ENCODE measurements at regions of chr5 and their contacts with region 1.

Region 1: DNA sequence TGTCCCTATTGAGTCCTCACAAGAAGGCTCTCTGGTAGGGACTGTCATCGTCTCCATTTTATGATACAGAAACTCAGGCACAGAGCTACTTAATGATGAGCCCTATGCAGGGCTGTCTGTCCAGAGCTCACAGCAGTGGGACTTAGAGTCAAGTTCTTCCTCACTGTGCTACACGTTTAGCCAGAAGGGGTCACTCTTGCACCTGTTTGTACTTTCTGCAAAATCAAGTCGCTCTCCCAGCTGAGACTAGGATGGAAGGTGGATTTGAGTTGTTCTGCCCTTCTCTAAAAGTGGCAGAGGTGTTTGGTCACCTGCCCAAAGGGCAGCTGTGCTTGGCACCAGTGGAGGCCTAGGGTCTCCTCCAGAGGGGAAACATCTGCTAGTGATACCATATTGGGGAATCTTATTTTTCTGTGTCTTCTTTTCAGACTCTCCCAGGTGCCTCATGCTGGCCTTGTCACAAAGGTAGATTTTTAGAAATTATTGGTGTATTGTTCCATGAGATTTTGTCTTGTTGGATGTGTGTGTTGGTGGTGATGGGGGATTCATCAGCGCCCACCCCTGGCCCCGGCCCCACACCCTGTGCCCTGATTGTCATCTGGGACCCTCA is 104.2 kb downstream of the PPARGC1B start:
- DNase-seq: peak; percentile 41
- H3K4me3 ChIP-seq: no peak overlapping the region
- H3K27me3 ChIP-seq: peaks cover 1% of the 10 kb centered on the region; the same call in 1 of the 2 replicates
- CTCF ChIP-seq: peak; percentile 83

Region 2: GRCh38 chr5:149654231-149654630 is 180.1 kb before region 1 on chr5:
- CTCF ChIA-PET with region 1: interaction called, 3 read pairs
- POLR2A ChIA-PET with region 1: interaction called, 10 read pairs
- DNase-seq: no peak
- H3K4me3 ChIP-seq: no peak overlapping the region
- H3K27me3 ChIP-seq: peaks cover 4% of the 10 kb centered on the region
- CTCF ChIP-seq: no peak

Region 3: GRCh38 chr5:149935431-149935901 is 101.1 kb after region 1 on chr5:
- CTCF ChIA-PET with region 1: interaction called, 10 read pairs
- POLR2A ChIA-PET with region 1: no interaction called
- DNase-seq: no peak
- H3K4me3 ChIP-seq: no peak overlapping the region
- H3K27me3 ChIP-seq: 0 out of 2 replicates have a peak, but pooled peaks cover 2% of the 10 kb centered on the region
- CTCF ChIP-seq: no peak

Region 4: GRCh38 chr5:150217873-150218692 is 383.7 kb after region 1 on chr5:
- CTCF ChIA-PET with region 1: interaction called, 22 read pairs
- POLR2A ChIA-PET with region 1: interaction called, 3 read pairs
- DNase-seq: no peak
- H3K4me3 ChIP-seq: no peak overlapping the region
- H3K27me3 ChIP-seq: peaks cover 1% of the 10 kb centered on the region; the same call in 1 of the 2 replicates
- CTCF ChIP-seq: peak; percentile 77